ENCODE measurements at regions of chr2 and their contacts with region 1.

Region 1: DNA sequence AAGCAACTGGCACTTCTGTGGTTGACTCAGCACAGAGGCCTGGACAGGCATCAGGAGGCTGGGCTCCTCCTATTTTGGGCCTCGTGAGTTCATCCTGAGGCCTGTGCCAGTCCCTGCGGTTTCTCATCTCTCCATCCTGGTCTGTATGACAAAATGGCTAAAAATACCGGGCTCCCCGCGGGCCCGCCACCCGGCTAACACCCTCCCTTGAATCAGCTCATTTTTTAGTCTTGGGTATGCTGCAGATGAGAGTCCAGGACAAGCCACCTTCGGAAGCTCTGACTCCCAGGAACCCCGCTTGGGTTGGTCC is 62.4 kb upstream of the YWHAQ start:
- DNase-seq: peak; percentile 87 to 96
- ATAC-seq: peak; percentile 97 to 98
- H3K4me3 ChIP-seq: peak overlapping the region; percentile 26 to 46 (median 38)
- H3K27ac ChIP-seq: peak overlapping the region; percentile 90 to 97 (median 96)
- H3K4me1 ChIP-seq: peaks cover 19 to 20% of the 10 kb centered on the region in 2 donors
- H3K27me3 ChIP-seq: no peaks in the 10 kb centered on the region
- CTCF ChIP-seq: no peak
- POLR2A ChIP-seq: no peak

Region 2: DNA sequence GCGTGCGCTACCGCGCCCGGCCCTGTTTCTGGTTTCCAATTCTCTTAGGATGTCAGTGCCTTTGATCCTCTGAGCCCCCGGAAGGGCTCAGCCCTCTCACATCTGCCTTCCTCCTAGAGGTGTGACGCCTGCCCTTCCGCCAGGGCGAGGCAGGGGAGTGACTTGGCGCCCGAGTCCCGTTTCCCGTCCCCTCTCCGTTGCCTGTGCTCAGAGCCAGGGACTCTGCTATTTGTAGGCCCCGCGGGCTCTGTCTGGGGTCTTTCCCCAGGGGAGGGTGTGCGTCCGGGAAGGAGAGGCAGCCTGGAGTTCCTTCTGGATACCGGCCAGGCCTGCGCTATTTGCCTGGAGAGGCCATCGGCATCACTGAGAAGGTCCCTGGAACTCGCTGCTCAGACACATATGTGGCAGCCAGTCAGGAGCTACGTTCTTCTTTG is 46.4 kb after region 1 on chr2:
- in situ Hi-C with region 1: no loop called
- intact Hi-C with region 1: loop called (anchors 2 kb)
- DNase-seq: peak; percentile 28 to 60
- ATAC-seq: peak; percentile 37 to 39
- H3K4me3 ChIP-seq: peak overlapping the region; percentile 42 to 57 (median 50)
- H3K27ac ChIP-seq: peak overlapping the region; percentile 81 to 91 (median 86)
- H3K4me1 ChIP-seq: peaks cover 22 to 23% of the 10 kb centered on the region in 2 donors
- H3K27me3 ChIP-seq: no peaks in the 10 kb centered on the region
- CTCF ChIP-seq: no peak
- POLR2A ChIP-seq: no peak